ENCODE measurements at regions of chr1 and their contacts with region 1.

Region 1: GRCh38 chr1:68346188-68346808 is 103.5 kb downstream of the RPE65 start:
- DNase-seq: peak; percentile 19
- H3K4me3 ChIP-seq: no peak overlapping the region
- H3K27ac ChIP-seq: no peak overlapping the region
- H3K4me1 ChIP-seq: peaks cover 0 to 3% of the 10 kb centered on the region in 2 experiments; a peak in 1 of 4 replicates
- H3K27me3 ChIP-seq: no peaks in the 10 kb centered on the region
- CTCF ChIP-seq: peak; percentile 67
- EP300 ChIP-seq: no peak
- RAD21 ChIP-seq: peak; percentile 59

Region 2: GRCh38 chr1:68103884-68104554 is 242.3 kb before region 1 on chr1:
- CTCF ChIA-PET with region 1: interaction called, 21 read pairs
- POLR2A ChIA-PET with region 1: no interaction called
- DNase-seq: no peak
- H3K4me3 ChIP-seq: no peak overlapping the region
- H3K27ac ChIP-seq: peak overlapping the region in 1 of 2 experiments; percentile 81; a peak in 2 of 4 replicates
- H3K4me1 ChIP-seq: peaks cover 0 to 11% of the 10 kb centered on the region in 2 experiments; a peak in 2 of 4 replicates
- H3K27me3 ChIP-seq: no peaks in the 10 kb centered on the region
- CTCF ChIP-seq: no peak
- EP300 ChIP-seq: peak in 1 of 2 experiments; percentile 16; a peak in 1 of 4 replicates
- RAD21 ChIP-seq: no peak

Region 3: DNA sequence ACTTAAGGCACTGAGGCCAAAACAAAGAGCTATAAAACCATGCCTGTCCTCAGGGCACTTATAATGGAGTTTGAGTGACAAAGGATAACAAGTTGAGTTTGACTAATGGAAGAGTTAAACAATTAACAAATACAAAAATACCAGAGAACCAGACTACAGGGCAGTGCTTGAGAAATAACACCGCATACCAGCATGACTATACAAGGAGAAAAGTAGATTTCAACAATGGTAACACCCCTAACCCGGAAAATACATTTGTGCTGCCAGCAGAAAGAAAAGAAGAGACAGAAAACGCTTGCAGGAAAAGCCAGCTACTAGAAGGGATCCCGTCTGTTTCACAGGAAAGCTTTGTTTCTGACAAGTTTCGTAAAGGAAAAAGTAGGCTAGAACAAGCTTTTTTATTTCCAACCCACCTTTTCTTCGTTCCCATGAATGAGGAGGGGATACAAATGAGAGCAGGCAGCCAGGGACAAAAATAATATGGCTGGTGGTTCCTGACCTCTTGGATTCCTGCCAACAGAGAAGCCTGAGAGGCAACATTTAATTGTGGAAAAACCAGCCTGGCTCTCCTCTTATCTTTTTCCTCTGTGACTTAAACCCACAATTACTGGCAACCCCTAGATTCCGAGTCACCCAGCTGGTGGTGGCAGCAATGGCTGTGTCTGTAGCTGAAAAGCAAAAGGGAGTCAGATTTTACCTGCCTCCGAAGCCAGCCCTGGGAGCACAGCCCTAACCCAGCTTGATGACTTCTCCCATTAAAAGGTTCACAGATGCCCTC is 170.5 kb before region 1 on chr1:
- CTCF ChIA-PET with region 1: interaction called, 13 read pairs
- POLR2A ChIA-PET with region 1: no interaction called
- DNase-seq: peak; percentile 68
- H3K4me3 ChIP-seq: no peak overlapping the region; a peak in 1 of 4 replicates
- H3K27ac ChIP-seq: peak overlapping the region in 1 of 2 experiments; percentile 51; a peak in 2 of 4 replicates
- H3K4me1 ChIP-seq: peaks cover 25 to 40% of the 10 kb centered on the region in 2 experiments
- H3K27me3 ChIP-seq: no peaks in the 10 kb centered on the region
- CTCF ChIP-seq: no peak
- EP300 ChIP-seq: peak in 1 of 2 experiments; percentile 68; a peak in 2 of 4 replicates
- RAD21 ChIP-seq: peak; percentile 30

Region 4: DNA sequence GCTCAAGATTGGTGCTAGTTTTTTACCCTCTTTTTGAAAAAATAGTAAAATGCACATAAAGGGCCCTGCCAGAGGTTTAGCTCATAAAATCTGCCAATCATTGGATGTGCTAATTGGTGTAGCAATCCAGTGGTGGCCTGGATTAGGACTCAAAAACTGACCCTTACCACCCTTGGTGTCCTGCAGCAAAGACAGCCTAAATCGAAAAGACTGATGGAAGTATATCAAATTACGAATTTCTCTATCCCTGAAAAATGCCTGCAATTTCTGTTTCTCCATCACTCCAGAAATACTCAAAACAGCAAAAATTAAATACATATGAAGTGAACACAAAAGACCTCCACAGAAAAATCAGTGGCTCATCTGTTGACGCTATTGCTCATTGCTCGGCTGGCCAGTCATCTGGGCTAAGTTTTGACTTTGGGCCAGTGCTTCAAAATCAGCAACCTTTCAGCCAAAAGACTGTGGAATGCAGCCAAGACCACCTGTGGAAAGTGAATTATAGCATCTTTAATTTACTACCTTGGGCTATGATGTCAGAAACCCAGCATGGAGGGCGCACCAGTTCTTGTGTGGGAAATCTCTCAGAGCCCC is 144.0 kb before region 1 on chr1:
- CTCF ChIA-PET with region 1: no interaction called
- POLR2A ChIA-PET with region 1: no interaction called
- DNase-seq: no peak
- H3K4me3 ChIP-seq: no peak overlapping the region
- H3K27ac ChIP-seq: peak overlapping the region in 1 of 2 experiments; percentile 52; a peak in 2 of 4 replicates
- H3K4me1 ChIP-seq: peaks cover 0 to 56% of the 10 kb centered on the region in 2 experiments
- H3K27me3 ChIP-seq: no peaks in the 10 kb centered on the region
- CTCF ChIP-seq: no peak
- EP300 ChIP-seq: peak in 1 of 2 experiments; percentile 62; a peak in 1 of 4 replicates
- RAD21 ChIP-seq: no peak

Region 5: GRCh38 chr1:68321084-68321685 is 25.1 kb before region 1 on chr1:
- CTCF ChIA-PET with region 1: interaction called, 24 read pairs
- POLR2A ChIA-PET with region 1: no interaction called
- DNase-seq: peak; percentile 37
- H3K4me3 ChIP-seq: no peak overlapping the region
- H3K27ac ChIP-seq: no peak overlapping the region
- H3K4me1 ChIP-seq: peaks cover 0 to 14% of the 10 kb centered on the region in 2 experiments; a peak in 1 of 4 replicates
- H3K27me3 ChIP-seq: no peaks in the 10 kb centered on the region
- CTCF ChIP-seq: peak; percentile 66
- EP300 ChIP-seq: no peak
- RAD21 ChIP-seq: peak; percentile 61

Region 6: GRCh38 chr1:68331117-68331865 is 15.0 kb before region 1 on chr1:
- CTCF ChIA-PET with region 1: interaction called, 28 read pairs
- POLR2A ChIA-PET with region 1: no interaction called
- DNase-seq: no peak
- H3K4me3 ChIP-seq: no peak overlapping the region
- H3K27ac ChIP-seq: peak overlapping the region in 1 of 2 experiments; percentile 28; a peak in 1 of 4 replicates
- H3K4me1 ChIP-seq: peaks cover 0 to 10% of the 10 kb centered on the region in 2 experiments; a peak in 1 of 4 replicates
- H3K27me3 ChIP-seq: no peaks in the 10 kb centered on the region
- CTCF ChIP-seq: no peak
- EP300 ChIP-seq: peak in 1 of 2 experiments; percentile 34; a peak in 1 of 4 replicates
- RAD21 ChIP-seq: no peak

Region 7: GRCh38 chr1:68358439-68358838 is 12.1 kb after region 1 on chr1:
- CTCF ChIA-PET with region 1: interaction called, 29 read pairs
- POLR2A ChIA-PET with region 1: no interaction called
- DNase-seq: no peak
- H3K4me3 ChIP-seq: no peak overlapping the region
- H3K27ac ChIP-seq: no peak overlapping the region
- H3K4me1 ChIP-seq: no peaks in the 10 kb centered on the region
- H3K27me3 ChIP-seq: no peaks in the 10 kb centered on the region
- CTCF ChIP-seq: no peak
- EP300 ChIP-seq: no peak
- RAD21 ChIP-seq: no peak

Region 8: GRCh38 chr1:68365709-68366382 is 19.5 kb after region 1 on chr1:
- CTCF ChIA-PET with region 1: interaction called, 10 read pairs
- POLR2A ChIA-PET with region 1: no interaction called
- DNase-seq: no peak
- H3K4me3 ChIP-seq: no peak overlapping the region
- H3K27ac ChIP-seq: no peak overlapping the region
- H3K4me1 ChIP-seq: no peaks in the 10 kb centered on the region
- H3K27me3 ChIP-seq: no peaks in the 10 kb centered on the region
- CTCF ChIP-seq: no peak
- EP300 ChIP-seq: no peak
- RAD21 ChIP-seq: no peak

Region 9: GRCh38 chr1:68481041-68481440 is 134.7 kb after region 1 on chr1:
- CTCF ChIA-PET with region 1: no interaction called
- POLR2A ChIA-PET with region 1: no interaction called
- DNase-seq: no peak
- H3K4me3 ChIP-seq: no peak overlapping the region
- H3K27ac ChIP-seq: no peak overlapping the region
- H3K4me1 ChIP-seq: peaks cover 0 to 11% of the 10 kb centered on the region in 2 experiments; a peak in 3 of 4 replicates
- H3K27me3 ChIP-seq: no peaks in the 10 kb centered on the region
- CTCF ChIP-seq: no peak
- EP300 ChIP-seq: no peak
- RAD21 ChIP-seq: no peak

Measured in SK-N-SH (cell line).